WTC11 (cell line): ENCODE measurements at regions of chr20 and their contacts with region 1.

Region 1: DNA sequence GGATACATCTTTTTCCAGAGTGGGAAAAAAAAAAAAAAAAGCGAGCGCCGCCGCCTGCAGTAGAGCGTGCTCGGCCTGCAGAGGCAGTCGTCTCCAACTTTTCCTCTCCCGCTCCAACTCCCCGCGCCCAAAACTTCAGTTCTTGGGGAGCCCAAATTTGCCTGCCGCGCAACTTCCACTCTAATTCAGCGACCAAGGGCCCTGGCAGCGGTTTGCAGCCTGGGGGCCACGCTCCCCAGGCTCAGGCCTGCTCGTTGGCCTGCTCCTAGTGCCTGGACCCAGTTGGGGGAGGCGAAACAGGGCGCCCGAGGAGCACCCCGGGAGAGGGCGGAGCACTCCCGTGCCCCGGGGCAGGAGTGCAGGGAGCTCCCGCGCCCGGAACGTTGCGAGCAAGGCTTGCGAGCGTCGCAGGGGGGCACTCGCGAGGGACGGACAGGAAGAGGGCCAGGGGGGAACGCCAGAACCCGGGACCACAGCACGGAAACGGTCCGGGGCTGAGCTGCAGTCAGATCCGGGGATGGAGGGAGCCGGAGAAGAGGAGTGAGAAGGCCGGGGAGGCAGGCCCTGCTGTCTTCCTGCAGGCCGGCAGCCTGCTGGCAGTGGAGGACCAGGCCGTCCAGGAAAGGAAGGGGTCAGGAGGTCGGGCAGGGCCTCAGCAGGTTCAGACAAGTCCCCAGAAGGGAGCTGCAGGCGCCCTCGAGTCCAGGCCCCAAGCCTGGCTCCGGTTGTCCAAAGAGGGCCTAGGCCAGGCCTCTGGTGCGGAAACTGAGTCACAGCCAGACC is at the start of gene STX16:
- DNase-seq: peak; percentile 89
- ATAC-seq: peak; percentile 76
- H3K4me3 Mint-ChIP-seq: peak within 1 kb of the TSS; percentile 90
- H3K27ac Mint-ChIP-seq: peak within 1 kb of the TSS; percentile 95
- H3K4me1 Mint-ChIP-seq: peaks cover 34% of the 10 kb centered on the region
- H3K27me3 Mint-ChIP-seq: no peaks in the 10 kb centered on the region; the same call in 1 of the 2 replicates
- CTCF ChIP-seq: peak; percentile 42
- total RNA-seq, gene STX16: 89.1 to 116 TPM (median 113 TPM) in 3 replicates

Region 2: GRCh38 chr20:58219301-58219700 is 431.7 kb before region 1 on chr20:
- CTCF ChIA-PET with region 1: no interaction called
- POLR2A ChIA-PET with region 1: no interaction called
- DNase-seq: no peak
- ATAC-seq: no peak
- H3K4me3 Mint-ChIP-seq: no peak overlapping the region
- H3K27ac Mint-ChIP-seq: no peak overlapping the region
- H3K4me1 Mint-ChIP-seq: no peaks in the 10 kb centered on the region
- H3K27me3 Mint-ChIP-seq: peaks cover 7% of the 10 kb centered on the region; the same call in 1 of the 2 replicates
- CTCF ChIP-seq: no peak

Region 3: GRCh38 chr20:58618351-58619076 is 32.5 kb before region 1 on chr20:
- CTCF ChIA-PET with region 1: interaction called, 15 read pairs
- POLR2A ChIA-PET with region 1: interaction called, 18 read pairs
- DNase-seq: no peak
- ATAC-seq: no peak
- H3K4me3 Mint-ChIP-seq: no peak overlapping the region
- H3K27ac Mint-ChIP-seq: no peak overlapping the region
- H3K4me1 Mint-ChIP-seq: peaks cover 21% of the 10 kb centered on the region
- H3K27me3 Mint-ChIP-seq: peaks cover 45% of the 10 kb centered on the region
- CTCF ChIP-seq: no peak

Region 4: GRCh38 chr20:58692594-58693226 is 41.7 kb after region 1 on chr20 and contains the start of gene NPEPL1:
- CTCF ChIA-PET with region 1: interaction called, 41 read pairs
- POLR2A ChIA-PET with region 1: interaction called, 6 read pairs
- DNase-seq: peak; percentile 58
- ATAC-seq: peak; percentile 79
- H3K4me3 Mint-ChIP-seq: peak within 1 kb of the TSS; percentile 58
- H3K27ac Mint-ChIP-seq: peak within 1 kb of the TSS; percentile 96
- H3K4me1 Mint-ChIP-seq: peaks cover 41% of the 10 kb centered on the region
- H3K27me3 Mint-ChIP-seq: no peaks in the 10 kb centered on the region
- CTCF ChIP-seq: no peak
- total RNA-seq, gene NPEPL1: 35.3 to 39.9 TPM (median 35.8 TPM) in 3 replicates

Region 5: GRCh38 chr20:58774214-58774613 is 123.2 kb after region 1 on chr20:
- CTCF ChIA-PET with region 1: no interaction called
- POLR2A ChIA-PET with region 1: no interaction called
- DNase-seq: no peak
- ATAC-seq: no peak
- H3K4me3 Mint-ChIP-seq: no peak overlapping the region
- H3K27ac Mint-ChIP-seq: no peak overlapping the region
- H3K4me1 Mint-ChIP-seq: no peaks in the 10 kb centered on the region
- H3K27me3 Mint-ChIP-seq: peaks cover 28% of the 10 kb centered on the region
- CTCF ChIP-seq: no peak

Region 6: DNA sequence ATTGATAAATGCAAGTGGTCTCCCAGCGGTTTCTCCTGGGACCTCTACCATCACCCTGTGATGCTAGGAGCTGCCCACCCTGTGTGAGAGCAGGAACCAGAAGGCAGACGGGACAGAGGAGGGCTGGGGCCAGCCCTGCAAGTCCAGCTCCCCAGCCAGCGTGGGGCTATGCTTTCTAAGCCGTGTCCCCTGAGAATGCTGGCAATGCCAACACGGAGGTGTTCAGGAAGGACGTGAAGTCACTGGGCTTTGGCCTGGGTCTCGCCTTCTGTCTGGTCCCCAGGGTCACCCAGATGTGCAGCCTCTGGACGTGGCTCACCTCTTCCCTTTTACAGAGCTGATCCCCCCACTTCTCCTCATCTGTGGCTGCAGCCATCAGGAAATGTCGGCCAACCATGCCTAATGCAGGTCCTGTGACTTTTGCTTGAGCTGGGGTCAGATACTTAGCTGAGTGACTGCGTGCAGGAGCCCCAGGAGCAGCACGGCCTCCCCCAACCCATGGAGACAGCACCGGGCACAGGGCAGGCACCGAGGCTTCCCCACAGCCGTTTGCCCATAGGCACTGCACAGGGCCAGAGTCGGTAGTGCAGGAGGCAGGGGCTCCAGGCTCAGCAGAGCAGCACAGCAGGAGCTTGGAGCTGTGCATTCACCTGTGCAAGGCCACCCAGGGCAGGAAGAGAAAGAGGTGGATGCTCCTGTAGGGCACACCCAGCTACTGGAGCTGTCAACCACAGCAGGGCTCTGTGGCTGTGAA is 133.5 kb after region 1 on chr20:
- CTCF ChIA-PET with region 1: no interaction called
- POLR2A ChIA-PET with region 1: no interaction called
- DNase-seq: no peak
- ATAC-seq: no peak
- H3K4me3 Mint-ChIP-seq: no peak overlapping the region
- H3K27ac Mint-ChIP-seq: no peak overlapping the region
- H3K4me1 Mint-ChIP-seq: peaks cover 34% of the 10 kb centered on the region
- H3K27me3 Mint-ChIP-seq: peaks cover 14% of the 10 kb centered on the region
- CTCF ChIP-seq: no peak

Region 7: DNA sequence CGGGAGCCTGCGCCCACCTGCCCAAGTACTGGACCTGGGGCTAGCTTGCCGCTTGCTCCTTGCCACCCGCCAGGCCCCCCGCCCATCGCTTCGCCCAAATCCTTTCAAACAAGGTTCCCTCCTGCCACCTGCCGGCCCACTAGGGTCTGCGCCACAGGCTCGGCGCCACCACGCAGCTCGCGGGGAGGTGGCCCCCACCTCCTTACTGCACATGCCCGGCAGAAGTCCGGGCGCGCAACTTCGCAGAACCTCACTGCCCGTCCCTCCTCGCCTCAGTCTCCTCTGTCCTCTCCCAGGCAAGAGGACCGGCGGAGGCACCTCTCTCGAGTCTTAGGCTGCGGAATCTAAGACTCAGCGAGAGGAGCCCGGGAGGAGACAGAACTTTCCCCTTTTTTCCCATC is 188.5 kb after region 1 on chr20:
- CTCF ChIA-PET with region 1: interaction called, 58 read pairs
- POLR2A ChIA-PET with region 1: interaction called, 25 read pairs
- DNase-seq: peak; percentile 75
- ATAC-seq: peak; percentile 33
- H3K4me3 Mint-ChIP-seq: peak overlapping the region; percentile 91
- H3K27ac Mint-ChIP-seq: peak overlapping the region; percentile 90; the same call in 1 of the 2 replicates
- H3K4me1 Mint-ChIP-seq: peaks cover 75% of the 10 kb centered on the region
- H3K27me3 Mint-ChIP-seq: peaks cover 17% of the 10 kb centered on the region
- CTCF ChIP-seq: peak; percentile 30; the same call in 1 of the 2 replicates